ENCODE measurements at regions of chr12 and their contacts with region 1.

Region 1: DNA sequence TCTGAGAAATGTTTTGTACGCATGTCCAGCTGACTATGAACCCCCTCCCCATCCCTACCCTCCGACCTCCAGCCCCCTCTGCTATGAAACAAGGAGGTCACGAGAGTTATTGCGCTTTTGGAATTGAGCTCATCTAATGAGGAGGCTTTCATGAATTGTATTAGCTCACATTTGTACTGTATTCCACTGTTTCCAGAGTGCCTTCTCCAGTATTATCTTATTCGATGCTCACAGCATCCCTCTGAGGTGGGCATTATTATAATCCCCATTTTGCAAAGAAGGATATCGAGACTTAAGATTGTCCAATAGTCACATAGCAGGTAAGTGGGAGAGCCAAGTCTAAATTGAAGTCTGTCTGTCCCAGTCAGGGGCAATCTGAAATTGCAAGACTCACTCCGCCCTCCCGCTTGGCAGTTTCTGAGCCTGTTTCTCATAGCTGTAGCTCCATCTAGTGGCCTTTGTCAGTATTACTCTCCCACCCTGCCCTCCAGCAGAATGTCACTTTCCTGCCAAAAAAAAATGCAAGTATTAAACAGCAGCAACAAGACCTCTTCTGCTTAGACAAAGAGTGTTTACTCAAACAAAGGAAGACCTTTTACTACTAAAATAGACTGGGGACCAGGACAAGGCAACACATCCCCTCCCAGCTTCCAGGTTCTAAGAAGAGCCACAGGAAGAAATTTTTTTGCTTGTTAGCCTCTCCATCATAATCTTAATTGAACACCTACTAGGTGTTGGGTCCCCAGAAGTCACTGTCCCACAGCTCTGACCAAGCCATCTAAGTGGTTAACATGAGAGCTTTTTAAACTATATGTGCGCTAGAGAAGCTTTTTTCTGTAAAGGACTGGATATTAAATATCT is 48.6 kb upstream of the TMEM233 start:
- DNase-seq: peak in 2 of 3 donors; percentile 39 to 66
- ATAC-seq: peak; percentile 87 to 96 (median 90)
- H3K4me3 ChIP-seq: no peak overlapping the region
- H3K27ac ChIP-seq: no peak overlapping the region
- H3K4me1 ChIP-seq: no peaks in the 10 kb centered on the region
- H3K27me3 ChIP-seq: no peaks in the 10 kb centered on the region
- CTCF ChIP-seq: peak; percentile 81 to 89 (median 86)
- POLR2A ChIP-seq: no peak

Region 2: GRCh38 chr12:119444456-119445044 is 100.4 kb before region 1 on chr12:
- intact Hi-C with region 1: loop called in 1 of 2 experiments (anchors 5 kb)
- DNase-seq: peak; percentile 27 to 55 (median 55)
- ATAC-seq: peak; percentile 68 to 78 (median 73)
- H3K4me3 ChIP-seq: no peak overlapping the region
- H3K27ac ChIP-seq: no peak overlapping the region
- H3K4me1 ChIP-seq: no peaks in the 10 kb centered on the region
- H3K27me3 ChIP-seq: peaks cover 0 to 5% of the 10 kb centered on the region in 2 donors
- CTCF ChIP-seq: peak; percentile 69 to 95 (median 90)
- POLR2A ChIP-seq: no peak